Motor neuron (in vitro differentiated cells): ENCODE measurements at regions of chr16 and their contacts with region 1.

Region 1: DNA sequence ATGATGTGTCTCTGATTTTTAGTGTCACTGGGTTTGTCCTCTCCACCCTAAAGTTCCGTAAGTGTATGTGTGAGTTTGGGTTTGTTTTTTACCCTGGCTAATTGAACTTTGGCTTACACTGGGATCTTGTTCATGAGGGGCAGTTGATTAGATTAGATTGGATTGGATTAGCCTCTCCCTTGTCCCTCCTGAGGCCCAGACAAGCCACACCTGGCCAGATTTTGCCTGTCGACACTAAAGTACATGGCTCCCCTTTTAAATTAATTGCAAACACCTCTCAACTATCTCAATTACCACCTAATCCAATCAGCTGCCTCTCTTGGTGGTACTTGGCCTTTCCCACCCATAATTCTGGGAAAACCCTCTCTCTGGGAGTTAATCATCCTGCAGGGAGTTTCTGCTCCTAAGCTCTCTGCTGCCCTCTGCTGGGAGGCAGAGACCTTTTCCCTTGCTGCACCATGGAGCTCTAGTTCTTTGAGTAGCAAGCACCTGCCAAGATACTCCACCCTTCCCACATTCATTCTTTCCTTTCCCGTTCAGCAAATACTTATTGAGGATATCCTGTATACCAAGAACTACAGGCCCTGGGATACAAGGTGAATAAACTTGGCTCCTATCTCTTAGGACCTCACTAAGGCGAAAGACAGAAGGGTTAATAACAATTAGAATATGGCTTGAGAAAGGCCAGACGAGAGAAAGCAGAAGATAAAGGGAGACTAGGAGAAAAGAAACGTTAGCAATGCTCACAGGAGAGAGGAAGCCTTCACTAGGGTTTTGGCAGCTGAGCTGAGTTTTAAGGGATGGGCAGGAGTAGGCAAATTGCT is 60.0 kb upstream of the MPHOSPH6 start:
- ATAC-seq: peak in 4 of 8 experiments; percentile 55 to 92 (median 86)
- H3K4me3 ChIP-seq: no peak overlapping the region
- H3K27ac ChIP-seq: no peak overlapping the region
- H3K4me1 ChIP-seq: peaks cover 0 to 2% of the 10 kb centered on the region in 2 donors

Region 2: GRCh38 chr16:81885976-81886586 is 343.9 kb before region 1 on chr16:
- in situ Hi-C with region 1: loop called in 1 of 9 experiments (anchors 25 kb)
- ATAC-seq: peak in 3 of 8 experiments; percentile 24 to 79 (median 70)
- H3K4me3 ChIP-seq: no peak overlapping the region
- H3K27ac ChIP-seq: no peak overlapping the region
- H3K4me1 ChIP-seq: no peaks in the 10 kb centered on the region

Region 3: DNA sequence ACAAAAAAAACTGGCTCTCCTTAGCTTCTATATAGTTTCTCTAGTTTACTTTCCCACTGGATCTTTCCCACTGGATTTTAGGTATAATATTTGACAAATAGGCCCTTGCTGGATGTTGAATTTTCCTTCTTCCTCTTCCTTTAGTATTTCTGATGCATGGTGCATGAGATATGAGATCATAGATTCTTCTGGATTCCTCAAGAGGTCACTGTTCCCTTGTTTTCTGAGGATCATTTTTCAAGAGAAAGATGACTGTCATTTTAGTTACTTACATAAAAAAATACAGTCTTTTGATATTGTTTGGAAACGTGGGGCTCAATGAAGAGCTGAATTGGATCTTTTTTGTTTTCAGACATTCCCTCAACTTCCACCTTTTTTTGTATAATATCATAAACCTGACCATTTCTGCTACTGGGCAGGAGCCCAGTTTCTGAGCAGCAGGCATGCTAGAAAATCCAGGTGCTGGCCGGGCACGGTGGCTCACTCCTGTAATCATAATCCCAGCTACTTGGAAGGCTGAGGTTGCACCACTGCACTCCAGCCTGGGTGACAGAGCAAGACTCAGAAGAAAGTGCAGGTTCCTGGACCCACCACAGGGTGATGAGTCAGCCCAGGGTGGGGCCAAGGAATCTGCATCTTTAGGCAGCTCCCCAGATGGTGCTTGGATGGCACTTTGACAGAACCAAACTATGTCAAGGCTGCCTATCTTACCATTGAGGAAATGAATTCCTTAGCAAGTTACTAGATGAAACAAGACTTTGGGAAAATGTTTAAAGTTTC is 289.0 kb before region 1 on chr16:
- in situ Hi-C with region 1: loop called in 2 of 9 experiments (anchors 25 kb)
- ATAC-seq: peak in 6 of 8 experiments; percentile 30 to 97 (median 48)
- H3K4me3 ChIP-seq: no peak overlapping the region
- H3K27ac ChIP-seq: no peak overlapping the region
- H3K4me1 ChIP-seq: peaks cover 31 to 45% of the 10 kb centered on the region in 2 donors

Region 4: DNA sequence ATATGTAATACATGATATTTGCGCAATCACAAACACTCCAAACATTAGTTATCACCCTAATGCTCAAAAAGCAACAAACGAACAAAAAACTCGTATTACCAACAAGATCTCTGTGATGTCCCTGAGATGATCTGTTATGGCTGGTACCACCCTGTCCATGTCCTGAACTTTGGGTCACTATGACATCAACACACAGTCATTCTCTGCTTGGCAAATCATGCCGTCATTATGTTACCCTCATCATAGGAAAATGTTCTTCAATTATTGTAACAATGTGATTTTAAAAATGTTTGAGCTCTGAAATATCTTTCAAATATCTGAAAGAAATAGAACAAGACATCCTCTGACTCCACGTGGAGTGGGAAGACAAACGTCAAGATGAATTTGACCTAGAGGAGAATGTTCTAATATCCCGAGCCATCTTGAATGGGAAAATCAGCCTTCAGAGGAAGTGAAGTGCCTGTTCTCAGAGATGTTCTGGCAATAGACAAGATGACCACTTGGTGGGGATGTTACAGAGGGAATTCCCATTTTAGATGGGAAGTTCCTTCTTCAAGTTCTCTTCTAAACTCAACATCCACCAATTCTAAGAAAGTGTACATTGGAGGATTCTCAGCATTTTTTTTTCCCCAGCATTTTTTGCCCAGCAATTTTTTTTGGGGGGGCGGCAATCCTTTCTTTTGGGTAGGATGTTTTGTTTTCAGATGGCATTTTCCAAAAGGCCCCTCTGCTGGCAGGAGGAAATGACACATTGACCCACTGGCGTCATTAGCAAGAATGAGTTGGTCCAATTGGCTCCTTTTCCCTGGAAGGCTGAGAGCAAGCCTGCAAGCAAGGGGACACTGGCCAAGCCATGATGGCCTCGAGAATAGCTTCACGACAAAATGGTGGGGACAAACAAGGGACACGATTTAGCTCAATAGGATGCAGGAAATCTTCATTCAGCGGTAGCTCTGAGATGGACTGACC is 198.6 kb before region 1 on chr16:
- in situ Hi-C with region 1: loop called in 3 of 9 experiments (anchors 10 to 25 kb)
- ATAC-seq: peak in 4 of 8 experiments; percentile 58 to 72 (median 64)
- H3K4me3 ChIP-seq: no peak overlapping the region
- H3K27ac ChIP-seq: no peak overlapping the region
- H3K4me1 ChIP-seq: peaks cover 9 to 18% of the 10 kb centered on the region in 2 donors